Right cardiac atrium (tissue), 5 donors: ENCODE measurements at regions of chr10 and their contacts with region 1.

Region 1: DNA sequence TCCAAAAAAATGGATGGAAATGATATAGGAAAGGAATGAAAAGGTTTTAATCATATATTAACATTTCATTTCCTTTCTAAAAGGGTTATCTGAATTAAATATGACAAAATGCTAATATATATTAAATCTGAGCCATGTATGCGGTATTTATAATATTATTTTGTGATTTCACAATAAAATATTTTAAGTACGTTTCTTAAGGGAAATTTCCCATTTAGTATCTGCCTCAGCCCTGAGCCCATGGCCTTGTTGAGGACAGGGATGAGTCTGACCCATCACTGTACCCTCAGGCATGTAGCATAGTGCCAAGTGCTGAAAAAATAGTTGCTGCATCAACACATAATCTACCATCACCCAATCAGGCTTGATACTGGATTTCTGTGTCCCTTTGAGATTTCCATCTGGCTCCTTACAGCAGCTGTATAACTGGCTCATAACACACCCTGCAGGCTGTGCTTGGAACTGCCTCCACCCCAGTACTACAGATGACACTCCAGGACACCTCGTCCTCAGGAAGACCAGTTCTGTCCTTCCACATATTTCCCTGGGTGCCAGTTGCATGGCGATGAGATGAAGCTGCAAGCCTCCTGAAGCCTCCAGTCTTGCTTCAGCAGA is 59.4 kb upstream of the ASAH2 start:
- DNase-seq: no peak
- ATAC-seq: no peak
- H3K4me3 ChIP-seq: no peak overlapping the region
- H3K27ac ChIP-seq: no peak overlapping the region
- H3K4me1 ChIP-seq: peaks cover 3% of the 10 kb centered on the region
- H3K27me3 ChIP-seq: no peaks in the 10 kb centered on the region

Region 2: GRCh38 chr10:50417886-50418830 is 107.5 kb after region 1 on chr10:
- intact Hi-C with region 1: loop called in 1 of 4 experiments (anchors 10 kb)
- DNase-seq: peak; percentile 87 to 92 (median 90)
- ATAC-seq: peak; percentile 95 to 98
- H3K4me3 ChIP-seq: peak overlapping the region; percentile 80
- H3K27ac ChIP-seq: peak overlapping the region; percentile 31
- H3K4me1 ChIP-seq: peaks cover 3% of the 10 kb centered on the region
- H3K27me3 ChIP-seq: no peaks in the 10 kb centered on the region

Region 3: GRCh38 chr10:50437248-50437647 is 126.6 kb after region 1 on chr10:
- intact Hi-C with region 1: no loop called
- DNase-seq: no peak
- ATAC-seq: no peak
- H3K4me3 ChIP-seq: no peak overlapping the region
- H3K27ac ChIP-seq: no peak overlapping the region
- H3K4me1 ChIP-seq: peaks cover 2% of the 10 kb centered on the region
- H3K27me3 ChIP-seq: no peaks in the 10 kb centered on the region